Activated CD4-positive, alpha-beta memory T cell treated with anti-CD3 and anti-CD28 coated beads for 36 hours (primary cell): ENCODE measurements at regions of chr10 and their contacts with region 1.

Region 1: GRCh38 chr10:101569838-101570766 is 18.0 kb downstream of the POLL start:
- DNase-seq: peak; percentile 85
- H3K4me3 Mint-ChIP-seq: peak overlapping the region; percentile 61
- H3K27ac Mint-ChIP-seq: no peak overlapping the region
- H3K4me1 Mint-ChIP-seq: peaks cover 13% of the 10 kb centered on the region
- H3K27me3 Mint-ChIP-seq: peaks cover 44% of the 10 kb centered on the region

Region 2: DNA sequence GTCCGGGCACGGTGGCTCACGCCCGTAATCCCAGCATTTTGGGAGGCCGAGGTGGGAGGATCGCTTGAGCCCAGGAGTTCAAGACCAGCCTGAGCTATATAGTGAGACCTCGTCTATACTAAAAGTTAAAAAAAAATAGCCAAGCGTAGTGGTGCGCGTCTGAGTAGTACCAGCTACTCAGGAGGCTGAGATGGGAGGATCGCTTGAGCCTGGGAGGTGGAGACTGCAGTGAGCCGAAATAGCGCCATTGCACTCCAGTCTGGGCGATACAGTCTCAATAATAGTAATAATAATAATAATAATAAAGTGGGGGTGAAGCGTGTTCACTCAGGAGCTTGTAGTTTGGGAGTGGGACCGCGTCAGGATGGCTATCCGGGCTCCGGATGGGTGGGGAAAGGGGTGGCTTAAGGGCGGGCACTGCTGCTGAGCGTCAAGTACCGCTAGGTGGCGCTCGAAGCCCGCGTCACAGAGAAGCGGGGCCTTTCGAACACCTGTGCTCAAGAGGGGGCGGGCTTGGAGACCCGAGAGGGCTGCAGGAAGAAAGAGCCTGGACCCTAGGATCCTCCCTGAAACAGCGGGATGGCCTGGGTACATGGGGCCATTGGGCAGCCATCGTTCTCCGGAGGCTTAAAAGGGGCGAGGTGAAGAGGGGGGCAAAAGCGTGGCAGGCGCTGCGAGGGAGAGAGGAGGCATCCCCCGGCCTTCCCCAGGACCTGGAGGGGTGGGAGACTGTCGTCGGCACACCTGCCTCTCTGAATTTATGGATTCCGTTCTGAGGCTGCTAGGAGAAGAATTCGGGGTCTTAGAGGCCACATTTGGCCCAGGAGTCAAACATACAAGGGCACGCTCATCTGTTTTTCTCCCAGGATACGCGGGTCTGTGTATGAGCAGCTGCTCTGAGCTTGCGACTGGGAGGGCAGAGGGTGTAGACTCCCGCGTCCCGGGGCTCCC is 355.4 kb before region 1 on chr10:
- CTCF ChIA-PET with region 1: interaction called, 79 read pairs
- POLR2A ChIA-PET with region 1: no interaction called
- intact Hi-C with region 1: loop called (anchors 2 kb)
- DNase-seq: peak; percentile 82
- H3K4me3 Mint-ChIP-seq: peak overlapping the region; percentile 31
- H3K27ac Mint-ChIP-seq: no peak overlapping the region
- H3K4me1 Mint-ChIP-seq: peaks cover 44% of the 10 kb centered on the region
- H3K27me3 Mint-ChIP-seq: peaks cover 70% of the 10 kb centered on the region

Region 3: GRCh38 chr10:101297901-101298486 is 272.1 kb before region 1 on chr10:
- CTCF ChIA-PET with region 1: interaction called, 8 read pairs
- POLR2A ChIA-PET with region 1: no interaction called
- intact Hi-C with region 1: loop called (anchors 2 kb)
- DNase-seq: peak; percentile 84
- H3K4me3 Mint-ChIP-seq: no peak overlapping the region
- H3K27ac Mint-ChIP-seq: no peak overlapping the region
- H3K4me1 Mint-ChIP-seq: no peaks in the 10 kb centered on the region
- H3K27me3 Mint-ChIP-seq: peaks cover 39% of the 10 kb centered on the region

Region 4: GRCh38 chr10:101467286-101467770 is 102.8 kb before region 1 on chr10:
- CTCF ChIA-PET with region 1: interaction called, 22 read pairs
- POLR2A ChIA-PET with region 1: interaction called, 3 read pairs
- intact Hi-C with region 1: no loop called
- DNase-seq: peak; percentile 15
- H3K4me3 Mint-ChIP-seq: no peak overlapping the region
- H3K27ac Mint-ChIP-seq: no peak overlapping the region
- H3K4me1 Mint-ChIP-seq: peaks cover 2% of the 10 kb centered on the region
- H3K27me3 Mint-ChIP-seq: no peaks in the 10 kb centered on the region

Region 5: GRCh38 chr10:101580486-101581399 is 10.6 kb after region 1 on chr10:
- CTCF ChIA-PET with region 1: interaction called, 26 read pairs
- POLR2A ChIA-PET with region 1: no interaction called
- intact Hi-C with region 1: no loop called
- DNase-seq: no peak
- H3K4me3 Mint-ChIP-seq: no peak overlapping the region
- H3K27ac Mint-ChIP-seq: no peak overlapping the region
- H3K4me1 Mint-ChIP-seq: no peaks in the 10 kb centered on the region
- H3K27me3 Mint-ChIP-seq: no peaks in the 10 kb centered on the region

Region 6: GRCh38 chr10:101782811-101783735 is 213.0 kb after region 1 on chr10 and contains the start of gene NPM3:
- CTCF ChIA-PET with region 1: interaction called, 10 read pairs
- POLR2A ChIA-PET with region 1: no interaction called
- intact Hi-C with region 1: no loop called
- DNase-seq: peak; percentile 92
- H3K4me3 Mint-ChIP-seq: peak within 1 kb of the TSS; percentile 98
- H3K27ac Mint-ChIP-seq: peak within 1 kb of the TSS; percentile 83
- H3K4me1 Mint-ChIP-seq: peaks cover 67% of the 10 kb centered on the region
- H3K27me3 Mint-ChIP-seq: peaks cover 10% of the 10 kb centered on the region
- total RNA-seq, gene NPM3: 168 to 172 TPM

Region 7: DNA sequence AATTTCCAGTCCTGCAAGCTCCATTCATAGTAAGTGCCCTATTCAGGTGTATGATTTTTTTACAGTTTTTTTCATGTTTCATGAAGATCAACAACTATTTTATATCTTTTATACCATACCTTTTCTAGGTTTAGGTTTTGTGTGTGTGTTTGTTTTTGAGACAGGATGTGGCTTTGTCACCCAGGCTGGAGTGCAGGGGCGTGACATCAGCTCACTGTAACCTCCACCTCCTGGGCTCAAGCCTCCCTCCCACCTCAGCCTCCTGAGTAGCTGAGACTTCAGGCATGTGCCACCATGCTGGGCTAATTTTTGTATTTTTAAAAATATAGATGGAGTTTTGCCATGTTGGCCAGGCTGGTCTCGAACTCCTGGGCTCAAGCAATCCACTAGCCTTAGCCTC is 450.8 kb after region 1 on chr10:
- CTCF ChIA-PET with region 1: no interaction called
- POLR2A ChIA-PET with region 1: no interaction called
- intact Hi-C with region 1: no loop called
- DNase-seq: peak; percentile 13
- H3K4me3 Mint-ChIP-seq: no peak overlapping the region
- H3K27ac Mint-ChIP-seq: no peak overlapping the region
- H3K4me1 Mint-ChIP-seq: peaks cover 2% of the 10 kb centered on the region
- H3K27me3 Mint-ChIP-seq: no peaks in the 10 kb centered on the region